Psoas muscle (tissue), 8 donors: ENCODE measurements at regions of chr1 and their contacts with region 1.

Region 1: GRCh38 chr1:229862017-229862774 is 204.8 kb upstream of the GALNT2 start:
- DNase-seq: no peak
- ATAC-seq: no peak
- H3K4me3 ChIP-seq: no peak overlapping the region
- H3K27ac ChIP-seq: peak overlapping the region; percentile 91
- H3K4me1 ChIP-seq: peaks cover 41% of the 10 kb centered on the region
- H3K27me3 ChIP-seq: no peaks in the 10 kb centered on the region
- CTCF ChIP-seq: no peak

Region 2: DNA sequence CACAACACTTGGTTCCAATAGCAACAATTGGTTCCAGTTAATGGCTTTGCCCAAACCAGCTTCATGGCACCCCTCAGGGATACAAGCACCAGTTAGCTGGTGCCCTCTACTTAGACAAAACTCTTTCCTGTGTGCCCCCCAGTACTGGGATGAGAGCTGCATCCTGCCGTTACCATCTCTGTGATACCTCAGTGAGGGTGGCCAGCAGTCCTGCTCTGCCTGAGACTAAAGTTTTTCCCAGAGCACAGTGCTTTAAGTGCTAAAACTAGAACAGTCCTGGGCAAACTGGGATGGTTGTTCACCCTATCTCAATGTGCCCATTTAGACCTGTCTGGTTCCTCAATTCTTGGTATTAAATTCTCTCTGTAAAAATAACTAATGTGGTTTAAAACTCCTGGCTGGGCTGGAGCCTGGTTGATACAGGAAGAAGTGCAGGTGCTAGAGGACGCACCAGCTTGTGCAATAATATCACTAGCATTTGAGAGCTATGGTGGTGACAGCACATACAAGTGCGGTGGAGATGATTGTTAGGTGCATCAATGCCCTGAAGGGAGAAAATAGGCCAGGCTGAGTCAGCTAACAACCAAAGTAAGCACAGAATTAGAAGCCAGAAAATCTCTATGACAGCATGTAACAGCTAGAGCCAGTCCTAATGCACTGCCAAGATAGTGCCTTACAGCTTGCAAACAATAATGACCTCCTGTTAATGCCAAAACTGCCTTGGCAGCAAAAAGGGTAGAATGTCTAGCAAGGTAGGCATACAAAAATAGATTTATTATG is 25.0 kb after region 1 on chr1:
- intact Hi-C with region 1: loop called in 1 of 2 experiments (anchors 2 kb)
- DNase-seq: no peak
- ATAC-seq: peak; percentile 86 to 88 (median 86)
- H3K4me3 ChIP-seq: no peak overlapping the region
- H3K27ac ChIP-seq: peak overlapping the region; percentile 98
- H3K4me1 ChIP-seq: peaks cover 36% of the 10 kb centered on the region
- H3K27me3 ChIP-seq: no peaks in the 10 kb centered on the region
- CTCF ChIP-seq: no peak

Region 3: GRCh38 chr1:230176871-230177411 is 314.7 kb after region 1 on chr1:
- intact Hi-C with region 1: loop called in 1 of 2 experiments (anchors 10 kb)
- DNase-seq: peak; percentile 73 to 83
- ATAC-seq: peak; percentile 73 to 86 (median 78)
- H3K4me3 ChIP-seq: peak overlapping the region; percentile 40
- H3K27ac ChIP-seq: peak overlapping the region; percentile 58
- H3K4me1 ChIP-seq: peaks cover 36% of the 10 kb centered on the region
- H3K27me3 ChIP-seq: no peaks in the 10 kb centered on the region
- CTCF ChIP-seq: no peak